HAP-1 (cell line): ENCODE measurements at regions of chr3 and their contacts with region 1.

Region 1: DNA sequence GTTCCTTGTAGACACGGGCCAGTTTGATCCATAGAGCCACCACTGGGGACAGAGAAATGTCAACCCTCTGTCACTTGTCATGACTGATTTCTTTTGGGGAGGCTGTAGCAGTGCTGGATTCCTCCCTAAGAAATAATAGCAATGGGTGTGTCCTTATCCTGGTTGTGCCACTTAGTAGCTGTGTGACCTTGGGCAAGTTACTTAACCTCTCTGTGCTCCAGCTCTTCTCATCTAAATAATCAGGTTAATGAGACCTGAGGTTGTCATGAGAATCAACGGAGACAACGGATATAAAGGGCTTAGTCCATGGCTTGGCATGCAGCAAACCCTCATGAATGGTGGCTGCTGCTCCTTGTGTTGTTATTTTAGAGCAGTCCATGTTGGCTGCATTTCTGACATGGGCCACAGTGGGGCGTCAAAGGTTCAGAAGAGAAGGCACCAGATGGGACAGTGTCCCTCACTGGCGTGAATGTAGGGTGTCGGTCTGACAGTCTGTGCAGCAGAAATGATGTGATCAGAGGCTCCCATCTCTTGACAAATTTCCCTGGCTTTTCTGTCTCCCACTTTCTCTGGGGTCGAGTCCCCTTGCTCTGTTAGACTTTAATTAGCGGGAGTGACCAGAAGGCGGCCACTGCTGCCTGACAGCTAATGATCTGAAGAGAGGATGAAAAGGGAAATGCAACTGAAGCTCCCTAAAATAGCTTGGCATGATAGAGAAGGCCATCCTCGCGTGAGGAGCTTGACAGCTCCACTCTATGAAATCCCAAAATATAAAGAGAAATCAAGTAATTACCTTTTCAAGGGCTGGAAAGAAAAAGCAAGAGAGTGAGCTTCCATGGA is 209.4 kb downstream of the CADPS start:
- DNase-seq: peak; percentile 54 to 83
- H3K4me3 ChIP-seq: no peak overlapping the region
- H3K4me1 ChIP-seq: no peaks in the 10 kb centered on the region
- H3K27me3 ChIP-seq: peaks cover 11% of the 10 kb centered on the region

Region 2: GRCh38 chr3:62421207-62421606 is 244.6 kb before region 1 on chr3:
- in situ Hi-C with region 1: no loop called
- DNase-seq: peak; percentile 40 to 46
- H3K4me3 ChIP-seq: no peak overlapping the region
- H3K4me1 ChIP-seq: peaks cover 17% of the 10 kb centered on the region
- H3K27me3 ChIP-seq: no peaks in the 10 kb centered on the region

Region 3: GRCh38 chr3:63207066-63207640 is 541.3 kb after region 1 on chr3:
- in situ Hi-C with region 1: loop called (anchors 25 kb)
- DNase-seq: no peak
- H3K4me3 ChIP-seq: no peak overlapping the region
- H3K4me1 ChIP-seq: no peaks in the 10 kb centered on the region
- H3K27me3 ChIP-seq: peaks cover 8% of the 10 kb centered on the region